Naive thymus-derived CD4-positive, alpha-beta T cell (primary cell): ENCODE measurements at regions of chr11 and their contacts with region 1.

Region 1: DNA sequence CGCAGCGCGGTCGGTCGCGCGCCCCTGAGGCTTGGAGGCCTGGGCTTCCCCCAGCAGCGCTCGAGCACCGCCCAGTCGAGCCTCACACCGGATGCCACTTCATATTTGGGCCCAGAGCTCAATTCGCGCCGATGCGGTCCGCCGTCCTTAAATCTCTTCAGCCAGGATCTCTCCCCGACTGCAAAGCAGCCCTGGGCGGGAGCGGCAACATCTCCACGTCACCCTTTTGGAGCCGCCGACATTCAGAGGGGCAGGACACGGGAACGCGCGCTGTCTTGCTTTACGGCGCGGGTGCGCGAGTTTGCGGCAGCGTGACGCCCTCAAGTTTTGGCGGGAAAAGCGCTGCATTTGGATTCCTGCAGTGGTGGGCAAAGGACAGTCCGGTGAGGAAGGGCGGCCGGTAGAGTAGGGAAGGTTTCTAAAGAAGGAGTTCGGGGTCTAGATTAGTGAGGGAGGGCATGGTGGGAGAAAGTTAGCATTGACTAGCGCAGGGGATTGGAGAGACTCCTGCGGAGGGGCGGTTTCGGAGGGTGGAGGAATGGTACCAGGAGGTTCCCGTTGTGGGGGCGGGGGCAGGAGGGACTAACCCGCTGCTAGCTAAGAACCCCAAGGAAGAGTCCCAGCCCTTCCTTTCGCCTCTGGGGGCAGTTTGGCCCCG is 796 bp downstream of the CHEK1 start:
- DNase-seq: peak; percentile 70 to 87 (median 82)
- ATAC-seq: peak; percentile 95
- H3K4me3 ChIP-seq: peak overlapping the region; percentile 91
- H3K4me3 Mint-ChIP-seq: peak overlapping the region; percentile 82 to 99 (median 98)
- H3K27ac ChIP-seq: peak overlapping the region; percentile 96
- H3K27ac Mint-ChIP-seq: peak overlapping the region; percentile 64 to 99 (median 98)
- H3K4me1 ChIP-seq: peaks cover 0 to 5% of the 10 kb centered on the region in 2 donors
- H3K4me1 Mint-ChIP-seq: peaks cover 13 to 47% (median 15%) of the 10 kb centered on the region in 7 donors
- H3K27me3 ChIP-seq: no peaks in the 10 kb centered on the region
- H3K27me3 Mint-ChIP-seq: no peaks in the 10 kb centered on the region

Region 2: DNA sequence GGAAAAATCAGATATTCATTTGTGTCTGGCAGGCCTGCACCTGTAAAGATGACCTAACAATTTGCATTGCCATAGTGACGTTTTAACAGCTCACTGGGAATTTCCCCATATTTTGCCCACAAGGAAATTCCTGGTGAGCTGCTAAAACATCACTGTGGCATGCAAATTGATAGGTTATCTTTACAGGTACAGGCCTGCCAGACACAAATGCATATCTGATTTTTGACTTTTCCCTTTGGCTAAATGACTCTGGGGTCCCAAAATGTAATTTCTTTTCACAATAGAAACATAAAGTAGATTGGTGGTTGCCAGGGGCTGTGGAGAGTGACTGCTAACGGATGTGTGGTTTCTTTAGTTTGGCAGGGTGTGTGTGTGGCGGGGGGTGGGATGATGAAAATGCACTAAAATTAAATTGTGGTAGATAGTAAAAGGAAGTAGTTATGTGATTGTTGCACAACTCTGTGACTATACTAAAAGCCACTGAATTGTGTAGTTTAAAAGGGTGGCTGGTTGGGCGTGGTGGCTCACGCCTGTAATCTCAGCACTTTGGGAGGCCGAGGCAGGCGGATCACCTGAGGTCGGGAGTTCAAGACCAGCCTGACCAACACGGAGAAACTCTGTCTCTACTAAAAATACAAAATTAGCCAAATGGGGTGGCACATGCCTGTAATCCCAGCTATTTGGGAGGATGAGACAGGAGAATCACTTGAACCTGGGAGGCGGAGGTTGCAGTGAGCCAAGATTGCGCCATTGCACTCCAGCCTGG is 111.2 kb before region 1 on chr11:
- CTCF ChIA-PET with region 1: no interaction called
- POLR2A ChIA-PET with region 1: no interaction called
- intact Hi-C with region 1: loop called in 1 of 2 experiments (anchors 1 kb)
- DNase-seq: peak; percentile 16 to 72 (median 53)
- ATAC-seq: peak; percentile 87
- H3K4me3 ChIP-seq: no peak overlapping the region
- H3K4me3 Mint-ChIP-seq: peak overlapping the region; percentile 12 to 72 (median 44)
- H3K27ac ChIP-seq: peak overlapping the region; percentile 56
- H3K27ac Mint-ChIP-seq: peak overlapping the region; percentile 58 to 94 (median 85)
- H3K4me1 ChIP-seq: peaks cover 17 to 24% of the 10 kb centered on the region in 2 donors
- H3K4me1 Mint-ChIP-seq: peaks cover 30 to 47% (median 38%) of the 10 kb centered on the region in 7 donors
- H3K27me3 ChIP-seq: no peaks in the 10 kb centered on the region
- H3K27me3 Mint-ChIP-seq: no peaks in the 10 kb centered on the region

Region 3: DNA sequence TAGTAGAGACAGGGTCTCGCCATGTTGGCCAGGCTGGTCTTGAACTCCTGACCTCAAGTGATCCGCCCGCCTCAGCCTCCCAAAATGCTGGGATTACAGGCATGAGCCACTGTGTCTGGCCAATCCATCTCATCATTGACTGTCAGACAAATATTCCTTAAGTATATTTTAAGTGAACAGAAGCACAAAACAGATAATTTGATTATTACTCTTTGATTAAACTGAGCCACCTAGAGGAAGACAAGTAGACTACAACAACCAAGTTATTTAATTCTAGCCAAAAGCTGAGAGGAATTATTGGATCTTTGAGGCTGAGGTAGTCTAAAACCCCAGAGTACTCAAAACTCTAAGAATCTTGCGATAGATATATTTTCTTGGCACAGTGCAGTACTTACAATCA is 53.6 kb after region 1 on chr11:
- CTCF ChIA-PET with region 1: no interaction called
- POLR2A ChIA-PET with region 1: no interaction called
- intact Hi-C with region 1: loop called in 1 of 2 experiments (anchors 1 kb)
- DNase-seq: no peak
- ATAC-seq: no peak
- H3K4me3 ChIP-seq: no peak overlapping the region
- H3K4me3 Mint-ChIP-seq: no peak overlapping the region
- H3K27ac ChIP-seq: no peak overlapping the region
- H3K27ac Mint-ChIP-seq: no peak overlapping the region
- H3K4me1 ChIP-seq: no peaks in the 10 kb centered on the region
- H3K4me1 Mint-ChIP-seq: no peaks in the 10 kb centered on the region
- H3K27me3 ChIP-seq: no peaks in the 10 kb centered on the region
- H3K27me3 Mint-ChIP-seq: no peaks in the 10 kb centered on the region

Region 4: DNA sequence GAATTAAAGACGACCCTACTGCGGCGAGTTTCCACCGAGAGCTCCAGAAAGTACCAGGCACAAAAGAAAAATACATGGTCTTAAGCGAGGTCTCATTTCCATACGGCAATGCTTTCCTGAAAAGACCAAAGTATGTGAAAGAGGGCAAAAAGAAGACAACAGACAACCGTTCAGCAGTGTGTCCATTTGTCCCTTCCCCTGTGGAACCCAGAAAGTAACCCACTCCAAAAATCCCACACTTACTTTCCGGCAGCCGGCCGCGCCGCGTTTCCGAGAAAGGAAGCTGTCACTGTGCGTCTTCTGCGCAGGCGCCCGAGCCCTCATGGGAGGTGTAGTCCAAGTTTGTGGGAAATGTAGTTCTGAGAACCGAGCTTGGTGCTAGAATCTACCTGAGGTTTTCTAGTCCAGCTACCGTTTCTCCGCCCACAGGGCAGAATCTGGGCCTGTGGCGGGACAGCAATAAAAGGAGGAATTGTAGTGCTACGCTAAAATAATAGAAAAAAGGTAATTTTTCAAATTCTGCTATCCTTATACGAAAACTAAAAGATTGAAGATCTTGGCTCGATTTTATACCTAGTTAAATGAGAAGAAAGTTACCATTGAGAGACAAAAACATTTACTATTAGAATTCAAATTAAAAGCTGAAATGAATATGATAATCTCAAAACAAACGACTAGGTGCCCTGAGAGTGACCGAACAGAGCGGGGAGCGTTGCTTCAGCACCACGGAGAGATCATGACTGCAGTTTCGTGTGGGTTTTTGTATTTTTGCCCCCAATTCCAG is 277.4 kb after region 1 on chr11 and contains the start of gene PUS3:
- CTCF ChIA-PET with region 1: no interaction called
- POLR2A ChIA-PET with region 1: interaction called, 4 read pairs
- intact Hi-C with region 1: loop called in 1 of 2 experiments (anchors 1 kb)
- DNase-seq: peak; percentile 73 to 88 (median 83)
- ATAC-seq: peak; percentile 96
- H3K4me3 ChIP-seq: peak within 1 kb of the TSS; percentile 91
- H3K4me3 Mint-ChIP-seq: peak within 1 kb of the TSS; percentile 82 to 98 (median 96)
- H3K27ac ChIP-seq: peak within 1 kb of the TSS; percentile 86
- H3K27ac Mint-ChIP-seq: peak within 1 kb of the TSS; percentile 83 to 96 (median 92)
- H3K4me1 ChIP-seq: peaks cover 7 to 13% of the 10 kb centered on the region in 2 donors
- H3K4me1 Mint-ChIP-seq: peaks cover 21 to 54% (median 39%) of the 10 kb centered on the region in 7 donors
- H3K27me3 ChIP-seq: peaks cover 0 to 4% of the 10 kb centered on the region in 2 donors
- H3K27me3 Mint-ChIP-seq: peaks cover 18 to 40% (median 29%) of the 10 kb centered on the region in 5 donors
- total RNA-seq, gene PUS3: 4.6 to 15.3 (median 9.3) TPM